ENCODE measurements at regions of chr2 and their contacts with region 1.

Region 1: DNA sequence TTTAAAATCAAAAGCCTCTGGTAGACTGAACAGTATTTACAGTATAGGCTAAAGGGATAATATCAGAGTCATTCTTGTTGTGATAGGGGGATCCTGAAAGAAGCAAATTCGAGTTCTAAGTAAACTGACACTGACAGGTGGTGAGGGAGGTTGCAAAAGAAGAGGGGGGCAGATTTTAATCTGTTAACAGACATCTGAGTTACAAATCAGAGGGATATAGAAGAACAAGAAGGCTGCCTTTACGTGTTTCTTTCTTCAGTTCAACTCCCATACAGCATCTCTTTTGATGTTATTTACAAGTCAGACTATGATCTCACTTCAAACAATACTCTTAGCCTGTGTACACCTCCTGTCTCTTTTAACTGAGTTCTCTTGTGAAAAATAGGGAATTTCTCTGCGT is 16.3 kb upstream of the ITGA4 start:
- DNase-seq: no peak
- H3K4me3 ChIP-seq: no peak overlapping the region
- H3K27ac ChIP-seq: no peak overlapping the region
- H3K4me1 ChIP-seq: no peaks in the 10 kb centered on the region; a peak in 1 of 4 replicates
- H3K27me3 ChIP-seq: no peaks in the 10 kb centered on the region; the same call in 1 of the 2 replicates
- CTCF ChIP-seq: no peak
- EP300 ChIP-seq: no peak
- RAD21 ChIP-seq: no peak

Region 2: GRCh38 chr2:181457121-181457740 is 16.3 kb after region 1 on chr2 and contains the start of gene ITGA4:
- CTCF ChIA-PET with region 1: interaction called, 15 read pairs
- POLR2A ChIA-PET with region 1: no interaction called
- DNase-seq: peak; percentile 92
- H3K4me3 ChIP-seq: peak within 1 kb of the TSS; percentile 74 to 82
- H3K27ac ChIP-seq: peak within 1 kb of the TSS in 1 of 2 experiments; percentile 42; a peak in 1 of 4 replicates
- H3K4me1 ChIP-seq: peaks cover 0 to 14% of the 10 kb centered on the region in 2 experiments; a peak in 2 of 4 replicates
- H3K27me3 ChIP-seq: no peaks in the 10 kb centered on the region
- CTCF ChIP-seq: peak; percentile 71
- EP300 ChIP-seq: no peak
- RAD21 ChIP-seq: peak; percentile 79
- polyA plus RNA-seq, gene ITGA4: 10.5 and 12.5 TPM in 2 replicates

Measured in SK-N-SH (cell line).